SK-N-SH (cell line): ENCODE measurements at regions of chr16 and their contacts with region 1.

Region 1: GRCh38 chr16:89706507-89707263 is 5.2 kb upstream of the SPATA2L start:
- DNase-seq: no peak
- H3K4me3 ChIP-seq: no peak overlapping the region
- H3K27ac ChIP-seq: no peak overlapping the region
- H3K4me1 ChIP-seq: peaks cover 0 to 6% of the 10 kb centered on the region in 2 experiments; a peak in 1 of 4 replicates
- H3K27me3 ChIP-seq: no peaks in the 10 kb centered on the region
- CTCF ChIP-seq: no peak
- EP300 ChIP-seq: no peak
- RAD21 ChIP-seq: no peak

Region 2: GRCh38 chr16:89602273-89602951 is 104.3 kb before region 1 on chr16:
- CTCF ChIA-PET with region 1: no interaction called
- POLR2A ChIA-PET with region 1: no interaction called
- DNase-seq: peak; percentile 72
- H3K4me3 ChIP-seq: no peak overlapping the region; a peak in 2 of 4 replicates
- H3K27ac ChIP-seq: peak overlapping the region in 1 of 2 experiments; percentile 77; a peak in 3 of 4 replicates
- H3K4me1 ChIP-seq: peaks cover 13 to 14% of the 10 kb centered on the region in 2 experiments; a peak in 3 of 4 replicates
- H3K27me3 ChIP-seq: no peaks in the 10 kb centered on the region
- CTCF ChIP-seq: no peak
- EP300 ChIP-seq: peak in 1 of 2 experiments; percentile 48; a peak in 1 of 4 replicates
- RAD21 ChIP-seq: no peak

Region 3: GRCh38 chr16:89721546-89722391 is 15.1 kb after region 1 on chr16:
- CTCF ChIA-PET with region 1: interaction called, 11 read pairs
- POLR2A ChIA-PET with region 1: interaction called, 5 read pairs
- DNase-seq: peak; percentile 75
- H3K4me3 ChIP-seq: peak overlapping the region; percentile 74 to 92
- H3K27ac ChIP-seq: peak overlapping the region; percentile 79 to 92
- H3K4me1 ChIP-seq: peaks cover 21 to 25% of the 10 kb centered on the region in 2 experiments; a peak in 3 of 4 replicates
- H3K27me3 ChIP-seq: no peaks in the 10 kb centered on the region
- CTCF ChIP-seq: no peak
- EP300 ChIP-seq: no peak
- RAD21 ChIP-seq: no peak

Region 4: GRCh38 chr16:89795676-89796075 is 89.0 kb after region 1 on chr16:
- CTCF ChIA-PET with region 1: interaction called, 12 read pairs
- POLR2A ChIA-PET with region 1: no interaction called
- DNase-seq: no peak
- H3K4me3 ChIP-seq: no peak overlapping the region
- H3K27ac ChIP-seq: no peak overlapping the region
- H3K4me1 ChIP-seq: peaks cover 0 to 23% of the 10 kb centered on the region in 2 experiments; a peak in 1 of 4 replicates
- H3K27me3 ChIP-seq: no peaks in the 10 kb centered on the region
- CTCF ChIP-seq: no peak
- EP300 ChIP-seq: no peak
- RAD21 ChIP-seq: no peak